Naive thymus-derived CD4-positive, alpha-beta T cell (primary cell): ENCODE measurements at regions of chr17 and their contacts with region 1.

Region 1: DNA sequence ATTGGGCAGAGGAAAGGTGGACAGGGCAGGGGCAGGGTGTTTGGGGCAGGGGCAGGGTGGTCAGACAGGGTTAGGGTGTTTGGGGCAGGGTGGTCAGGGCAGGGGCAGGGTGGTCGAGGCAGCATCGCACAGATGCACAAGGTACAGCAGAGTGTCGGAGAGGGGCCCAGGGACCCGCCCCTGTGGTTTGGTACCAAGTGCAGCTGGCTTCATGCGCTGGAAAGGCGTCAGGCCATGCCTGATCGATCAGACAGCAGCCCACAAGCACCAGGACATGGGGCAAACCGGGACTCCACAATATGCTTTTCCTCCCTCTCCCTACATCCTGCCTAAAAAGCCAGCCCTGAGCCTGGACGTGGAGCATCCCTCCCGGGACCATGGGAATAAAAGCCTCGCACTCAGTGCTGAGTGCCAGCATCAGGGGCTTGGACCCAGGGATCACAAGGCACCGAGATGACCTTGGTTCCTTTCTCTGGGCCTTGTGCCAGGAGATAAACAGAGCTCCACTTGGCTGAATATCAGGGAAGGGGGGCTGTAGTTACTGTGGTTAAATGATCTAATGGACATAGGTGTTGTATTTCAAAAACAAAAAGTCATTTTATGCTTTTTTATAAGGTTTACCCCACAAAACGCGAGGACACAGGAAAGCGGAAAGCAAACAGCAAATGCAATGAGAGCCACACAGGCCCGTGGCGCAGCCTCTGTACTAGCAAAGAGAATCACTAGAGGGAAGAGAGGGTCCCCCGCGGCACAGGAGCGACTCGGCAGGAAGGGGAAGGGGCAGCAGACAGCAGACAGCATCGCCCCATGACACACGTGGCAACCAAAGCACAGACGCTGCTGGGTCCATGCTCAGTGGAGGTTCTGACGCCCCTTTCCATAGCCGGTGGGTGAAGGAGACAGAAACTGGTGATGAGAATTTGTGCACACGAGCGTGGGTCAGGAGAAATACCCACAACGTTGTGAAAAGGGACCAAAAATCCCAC is 5.3 kb upstream of the HEXD start:
- DNase-seq: no peak
- ATAC-seq: no peak
- H3K4me3 ChIP-seq: no peak overlapping the region
- H3K4me3 Mint-ChIP-seq: no peak overlapping the region
- H3K27ac ChIP-seq: no peak overlapping the region
- H3K27ac Mint-ChIP-seq: peak overlapping the region in 1 of 9 donors; percentile 30
- H3K4me1 ChIP-seq: peaks cover 3 to 10% of the 10 kb centered on the region in 2 donors
- H3K4me1 Mint-ChIP-seq: peaks cover 14 to 26% (median 17%) of the 10 kb centered on the region in 7 donors
- H3K27me3 ChIP-seq: no peaks in the 10 kb centered on the region
- H3K27me3 Mint-ChIP-seq: no peaks in the 10 kb centered on the region

Region 2: DNA sequence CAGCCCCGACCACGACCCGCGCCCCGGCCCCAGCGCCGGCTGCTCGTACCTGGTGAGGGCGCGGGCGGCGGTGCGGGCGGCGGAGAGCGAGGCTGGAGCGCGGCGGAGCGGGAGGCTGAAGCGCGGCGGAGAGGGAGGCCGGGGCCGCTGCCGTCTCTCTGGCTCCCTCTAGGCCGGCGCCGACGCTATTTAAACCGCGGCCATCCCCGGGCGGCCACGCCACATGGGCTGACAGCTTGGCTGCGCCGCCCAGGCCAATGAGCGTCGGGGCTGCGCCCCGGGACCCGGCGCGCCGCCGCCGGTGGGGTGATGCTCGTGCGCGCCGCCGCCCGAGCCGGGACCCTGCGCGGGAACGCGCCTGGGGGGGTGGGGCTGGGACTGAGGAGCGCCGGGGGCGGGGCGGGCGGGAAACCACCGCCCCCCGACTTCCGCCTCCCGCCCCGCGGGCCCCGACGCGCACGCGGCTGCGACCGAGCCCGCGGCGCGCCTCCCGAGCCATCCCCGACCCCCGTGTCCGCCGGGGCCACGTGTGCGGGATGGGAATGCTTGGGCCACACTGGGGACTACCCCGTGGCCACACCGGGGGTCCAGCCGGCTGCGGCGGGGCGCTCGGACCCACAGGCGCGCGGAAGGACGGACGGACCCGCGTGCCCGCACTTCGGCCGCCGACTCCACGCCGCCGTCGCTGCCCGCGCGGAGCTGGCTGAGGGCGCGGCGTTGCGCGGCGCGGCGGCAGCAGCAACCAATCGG is 314.6 kb before region 1 on chr17 and contains the start of gene FASN:
- CTCF ChIA-PET with region 1: no interaction called
- POLR2A ChIA-PET with region 1: no interaction called
- intact Hi-C with region 1: no loop called
- DNase-seq: peak; percentile 84 to 93 (median 90)
- ATAC-seq: peak; percentile 87
- H3K4me3 ChIP-seq: peak within 1 kb of the TSS; percentile 61
- H3K4me3 Mint-ChIP-seq: peak within 1 kb of the TSS in 9 of 10 donors; percentile 36 to 84 (median 69)
- H3K27ac ChIP-seq: peak within 1 kb of the TSS; percentile 97
- H3K27ac Mint-ChIP-seq: peak within 1 kb of the TSS in 4 of 9 donors; percentile 63 to 80 (median 72)
- H3K4me1 ChIP-seq: peaks cover 4 to 12% of the 10 kb centered on the region in 2 donors
- H3K4me1 Mint-ChIP-seq: peaks cover 0 to 14% (median 7%) of the 10 kb centered on the region in 7 donors
- H3K27me3 ChIP-seq: no peaks in the 10 kb centered on the region
- H3K27me3 Mint-ChIP-seq: no peaks in the 10 kb centered on the region
- total RNA-seq, gene FASN: 24.3 to 168 (median 59.0) TPM

Region 3: GRCh38 chr17:82400830-82401229 is 12.0 kb before region 1 on chr17:
- CTCF ChIA-PET with region 1: no interaction called
- POLR2A ChIA-PET with region 1: interaction called, 3 read pairs
- intact Hi-C with region 1: loop called in 1 of 2 experiments (anchors 1 kb)
- DNase-seq: peak; percentile 27 to 65 (median 41)
- ATAC-seq: peak; percentile 85
- H3K4me3 ChIP-seq: peak overlapping the region; percentile 46
- H3K4me3 Mint-ChIP-seq: peak overlapping the region; percentile 80 to 98 (median 84)
- H3K27ac ChIP-seq: no peak overlapping the region
- H3K27ac Mint-ChIP-seq: peak overlapping the region; percentile 30 to 93 (median 81)
- H3K4me1 ChIP-seq: peaks cover 0 to 9% of the 10 kb centered on the region in 2 donors
- H3K4me1 Mint-ChIP-seq: peaks cover 11 to 23% (median 13%) of the 10 kb centered on the region in 7 donors
- H3K27me3 ChIP-seq: no peaks in the 10 kb centered on the region
- H3K27me3 Mint-ChIP-seq: no peaks in the 10 kb centered on the region